KBM-7 (cell line): ENCODE measurements at regions of chr12 and their contacts with region 1.

Region 1: GRCh38 chr12:66130277-66131066 is at the start of gene LLPH:
- DNase-seq: peak; percentile 89

Region 2: GRCh38 chr12:65140738-65141137 is 989.7 kb before region 1 on chr12:
- in situ Hi-C with region 1: no loop called
- DNase-seq: no peak

Region 3: GRCh38 chr12:66409195-66409871 is 278.9 kb after region 1 on chr12:
- in situ Hi-C with region 1: loop called (anchors 25 kb)
- DNase-seq: peak; percentile 81

Region 4: DNA sequence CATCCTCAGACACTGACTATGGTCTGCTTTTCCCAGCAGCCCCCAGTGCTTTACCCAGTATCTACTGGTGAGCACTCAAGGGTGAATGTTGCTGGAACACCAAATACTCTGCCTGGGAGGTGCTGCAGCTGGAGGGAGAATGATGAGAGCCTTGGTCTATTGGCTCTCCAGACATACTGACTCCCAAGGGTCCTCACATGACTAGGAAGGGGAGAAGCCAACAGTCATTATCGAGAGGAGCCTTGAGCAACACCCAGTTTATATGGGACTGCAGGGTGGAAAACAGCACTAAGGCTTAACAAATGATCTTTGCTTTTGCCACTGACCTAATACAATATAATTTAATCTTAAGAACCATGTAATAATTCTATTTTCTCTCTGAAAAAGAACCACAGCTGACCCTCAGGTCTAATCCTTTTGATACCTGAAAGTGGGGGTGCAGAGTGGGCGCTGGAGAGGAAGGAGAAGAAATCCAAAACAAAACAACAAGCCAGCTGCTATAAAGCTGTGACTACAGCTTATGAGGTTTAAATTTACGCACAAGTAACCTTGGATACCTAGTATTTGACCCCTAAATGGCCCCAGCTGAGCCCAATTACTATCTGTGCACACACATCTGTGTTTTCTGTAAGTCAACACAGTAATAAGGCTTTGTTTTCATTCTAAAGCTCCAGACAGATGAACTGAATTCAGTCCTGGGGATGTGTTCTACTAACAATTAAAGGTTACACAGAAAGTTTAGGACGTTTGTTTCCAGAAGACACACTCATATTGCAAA is 656.2 kb after region 1 on chr12:
- in situ Hi-C with region 1: no loop called
- DNase-seq: no peak